Mammary epithelial cell (primary cell): ENCODE measurements at regions of chr10 and their contacts with region 1.

Region 1: DNA sequence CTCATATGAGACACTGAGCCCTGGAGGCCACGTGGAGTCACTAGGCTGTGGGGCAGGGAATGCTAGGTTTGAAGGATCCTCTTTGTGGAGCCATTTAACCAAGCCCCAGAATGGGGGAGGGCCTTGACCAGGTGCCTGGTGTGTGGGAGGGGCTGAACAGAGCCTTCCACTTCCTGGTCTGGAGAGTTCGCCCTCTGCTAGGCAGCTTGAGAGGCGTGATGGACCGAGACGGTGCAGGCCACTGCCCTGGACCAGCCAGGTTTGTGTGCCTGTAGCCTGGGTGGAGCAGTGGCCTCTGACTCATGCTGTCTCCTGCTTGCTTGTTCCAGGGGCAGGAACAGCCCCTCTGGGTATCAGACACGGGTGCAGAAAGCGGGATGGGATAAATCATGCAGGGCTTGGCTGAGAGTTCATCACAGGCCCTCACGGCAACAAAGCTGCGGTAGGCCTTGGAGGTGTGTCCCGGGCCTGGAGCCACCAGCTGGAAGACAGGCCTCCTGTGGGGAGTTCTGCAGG is 27.4 kb downstream of the ADAMTS14 start:
- DNase-seq: no peak
- H3K4me3 ChIP-seq: no peak overlapping the region
- H3K27ac ChIP-seq: no peak overlapping the region
- H3K4me1 ChIP-seq: no peaks in the 10 kb centered on the region
- H3K27me3 ChIP-seq: no peaks in the 10 kb centered on the region
- CTCF ChIP-seq: no peak

Region 2: GRCh38 chr10:70589762-70590654 is 109.7 kb before region 1 on chr10:
- CTCF ChIA-PET with region 1: no interaction called
- dilution Hi-C with region 1: loop called (anchors 5 kb)
- in situ Hi-C with region 1: no loop called
- intact Hi-C with region 1: no loop called
- DNase-seq: no peak
- H3K4me3 ChIP-seq: no peak overlapping the region
- H3K27ac ChIP-seq: no peak overlapping the region
- H3K4me1 ChIP-seq: no peaks in the 10 kb centered on the region
- H3K27me3 ChIP-seq: peaks cover 16% of the 10 kb centered on the region
- CTCF ChIP-seq: no peak

Region 3: GRCh38 chr10:70729763-70730352 is 30.1 kb after region 1 on chr10:
- CTCF ChIA-PET with region 1: no interaction called
- dilution Hi-C with region 1: loop called (anchors 5 kb)
- in situ Hi-C with region 1: no loop called
- intact Hi-C with region 1: no loop called
- DNase-seq: no peak
- H3K4me3 ChIP-seq: no peak overlapping the region
- H3K27ac ChIP-seq: no peak overlapping the region
- H3K4me1 ChIP-seq: no peaks in the 10 kb centered on the region
- H3K27me3 ChIP-seq: peaks cover 9% of the 10 kb centered on the region
- CTCF ChIP-seq: no peak